CD4-positive, alpha-beta memory T cell (primary cell): ENCODE measurements at regions of chr10 and their contacts with region 1.

Region 1: GRCh38 chr10:97731346-97732051 is 5.4 kb upstream of the ZFYVE27 start:
- DNase-seq: peak; percentile 48 to 58 (median 55)
- H3K4me3 ChIP-seq: no peak overlapping the region
- H3K4me3 Mint-ChIP-seq: peak overlapping the region in 1 of 8 donors; percentile 40
- H3K27ac ChIP-seq: no peak overlapping the region
- H3K27ac Mint-ChIP-seq: no peak overlapping the region
- H3K4me1 ChIP-seq: peaks cover 2% of the 10 kb centered on the region
- H3K4me1 Mint-ChIP-seq: peaks cover 7 to 12% (median 11%) of the 10 kb centered on the region in 4 donors
- H3K27me3 ChIP-seq: no peaks in the 10 kb centered on the region
- H3K27me3 Mint-ChIP-seq: peaks cover 4 to 7% of the 10 kb centered on the region in 2 donors

Region 2: GRCh38 chr10:97532935-97533671 is 198.4 kb before region 1 on chr10:
- CTCF ChIA-PET with region 1: no interaction called
- POLR2A ChIA-PET with region 1: no interaction called
- intact Hi-C with region 1: no loop called
- DNase-seq: no peak
- H3K4me3 ChIP-seq: no peak overlapping the region
- H3K4me3 Mint-ChIP-seq: no peak overlapping the region
- H3K27ac ChIP-seq: no peak overlapping the region
- H3K27ac Mint-ChIP-seq: no peak overlapping the region
- H3K4me1 ChIP-seq: no peaks in the 10 kb centered on the region
- H3K4me1 Mint-ChIP-seq: peaks cover 0 to 2% (median 1%) of the 10 kb centered on the region in 4 donors
- H3K27me3 ChIP-seq: no peaks in the 10 kb centered on the region
- H3K27me3 Mint-ChIP-seq: no peaks in the 10 kb centered on the region

Region 3: DNA sequence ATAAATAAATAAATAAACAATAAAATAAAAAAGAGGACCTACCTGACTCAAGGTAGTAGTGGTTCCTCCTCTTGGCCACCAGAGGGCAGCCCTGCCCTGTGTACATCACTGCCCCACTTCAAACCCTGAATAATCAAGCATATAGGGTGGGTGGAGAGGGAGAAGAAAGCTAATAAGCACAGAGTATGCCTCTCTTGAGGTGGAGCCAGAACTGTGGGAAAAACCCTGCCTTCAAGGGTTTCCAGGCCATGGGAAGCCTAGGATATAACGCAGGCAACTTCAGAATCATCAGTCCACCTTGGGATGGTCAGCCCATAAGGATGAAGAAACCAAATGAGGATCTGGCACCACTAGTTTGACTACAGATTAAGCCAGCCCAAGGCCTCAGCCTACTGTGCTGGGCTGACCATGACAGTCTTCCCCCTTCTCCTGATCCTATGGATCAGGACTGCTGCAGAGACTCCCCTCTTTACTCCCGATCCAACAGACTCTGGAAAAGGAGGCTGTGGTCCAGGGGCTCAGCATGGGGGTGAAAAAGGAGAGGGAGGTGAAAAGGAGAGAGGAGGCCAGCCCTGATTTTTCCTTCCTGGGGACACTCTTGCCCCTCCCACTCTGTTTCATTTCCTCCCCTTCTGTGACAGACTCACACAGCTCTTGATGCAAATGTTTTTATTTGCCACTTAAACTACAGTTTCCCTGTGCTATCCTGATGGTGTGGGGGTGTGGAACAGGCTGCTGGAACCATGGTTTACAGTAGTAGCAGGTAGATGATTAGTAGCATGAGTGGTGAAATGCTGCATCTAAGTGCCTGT is 54.5 kb before region 1 on chr10:
- CTCF ChIA-PET with region 1: interaction called, 159 read pairs
- POLR2A ChIA-PET with region 1: interaction called, 4 read pairs
- intact Hi-C with region 1: loop called (anchors 1 kb)
- DNase-seq: peak; percentile 48 to 56 (median 53)
- H3K4me3 ChIP-seq: no peak overlapping the region
- H3K4me3 Mint-ChIP-seq: no peak overlapping the region
- H3K27ac ChIP-seq: no peak overlapping the region
- H3K27ac Mint-ChIP-seq: peak overlapping the region in 4 of 7 donors; percentile 7 to 73 (median 38)
- H3K4me1 ChIP-seq: no peaks in the 10 kb centered on the region
- H3K4me1 Mint-ChIP-seq: peaks cover 0 to 1% (median 0%) of the 10 kb centered on the region in 4 donors
- H3K27me3 ChIP-seq: no peaks in the 10 kb centered on the region
- H3K27me3 Mint-ChIP-seq: no peaks in the 10 kb centered on the region

Region 4: GRCh38 chr10:97714048-97714371 is 17.5 kb before region 1 on chr10:
- CTCF ChIA-PET with region 1: interaction called, 436 read pairs
- POLR2A ChIA-PET with region 1: interaction called, 16 read pairs
- intact Hi-C with region 1: loop called (anchors 1 kb)
- DNase-seq: peak; percentile 50 to 69 (median 54)
- H3K4me3 ChIP-seq: peak overlapping the region; percentile 30 to 55
- H3K4me3 Mint-ChIP-seq: peak overlapping the region; percentile 98 to 100 (median 99)
- H3K27ac ChIP-seq: no peak overlapping the region
- H3K27ac Mint-ChIP-seq: peak overlapping the region; percentile 37 to 96 (median 92)
- H3K4me1 ChIP-seq: peaks cover 6% of the 10 kb centered on the region
- H3K4me1 Mint-ChIP-seq: peaks cover 7 to 22% (median 14%) of the 10 kb centered on the region in 4 donors
- H3K27me3 ChIP-seq: no peaks in the 10 kb centered on the region
- H3K27me3 Mint-ChIP-seq: peaks cover 7 to 9% of the 10 kb centered on the region in 2 donors

Region 5: DNA sequence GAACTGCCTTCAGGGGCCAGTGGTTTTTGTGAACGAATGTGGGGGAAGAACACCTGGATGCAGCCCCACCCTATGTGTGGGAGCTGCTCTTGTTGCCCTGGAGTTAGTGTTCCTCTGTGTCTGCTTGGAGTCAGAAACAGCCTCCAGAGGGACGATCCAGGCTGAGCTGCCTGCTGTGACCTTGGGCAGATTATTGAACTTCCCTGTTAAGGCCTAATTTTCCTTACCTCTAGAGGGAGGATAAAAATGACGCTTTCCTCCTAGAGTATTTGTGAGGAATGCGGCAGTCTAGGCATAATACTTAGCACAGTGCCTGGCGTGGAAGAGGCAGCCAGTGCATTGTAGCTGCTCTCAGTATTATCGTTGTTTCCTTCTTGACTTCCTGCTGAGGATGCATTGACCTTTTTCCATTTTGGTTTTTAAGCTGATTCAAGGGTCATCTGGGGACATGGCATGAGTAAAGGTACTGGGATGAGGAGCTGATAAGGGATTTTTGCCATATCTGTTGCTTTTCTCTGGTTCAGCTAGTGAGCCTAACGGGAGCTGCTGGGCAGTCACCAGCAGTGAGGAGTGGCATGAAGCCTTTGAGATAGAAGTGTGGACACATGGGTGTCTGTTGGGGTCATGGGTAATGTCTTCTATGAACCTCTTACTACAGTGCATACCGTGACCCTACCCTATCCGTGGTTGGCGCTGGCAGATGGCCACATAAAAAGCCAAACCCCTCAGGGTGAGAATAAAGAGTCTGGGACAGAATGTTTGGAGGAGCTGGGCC is 11.9 kb after region 1 on chr10:
- CTCF ChIA-PET with region 1: interaction called, 19 read pairs
- POLR2A ChIA-PET with region 1: interaction called, 5 read pairs
- intact Hi-C with region 1: no loop called
- DNase-seq: no peak
- H3K4me3 ChIP-seq: no peak overlapping the region
- H3K4me3 Mint-ChIP-seq: peak overlapping the region in 1 of 8 donors; percentile 24
- H3K27ac ChIP-seq: no peak overlapping the region
- H3K27ac Mint-ChIP-seq: peak overlapping the region in 1 of 7 donors; percentile 14
- H3K4me1 ChIP-seq: peaks cover 29% of the 10 kb centered on the region
- H3K4me1 Mint-ChIP-seq: peaks cover 28 to 61% (median 45%) of the 10 kb centered on the region in 4 donors
- H3K27me3 ChIP-seq: no peaks in the 10 kb centered on the region
- H3K27me3 Mint-ChIP-seq: no peaks in the 10 kb centered on the region

Region 6: DNA sequence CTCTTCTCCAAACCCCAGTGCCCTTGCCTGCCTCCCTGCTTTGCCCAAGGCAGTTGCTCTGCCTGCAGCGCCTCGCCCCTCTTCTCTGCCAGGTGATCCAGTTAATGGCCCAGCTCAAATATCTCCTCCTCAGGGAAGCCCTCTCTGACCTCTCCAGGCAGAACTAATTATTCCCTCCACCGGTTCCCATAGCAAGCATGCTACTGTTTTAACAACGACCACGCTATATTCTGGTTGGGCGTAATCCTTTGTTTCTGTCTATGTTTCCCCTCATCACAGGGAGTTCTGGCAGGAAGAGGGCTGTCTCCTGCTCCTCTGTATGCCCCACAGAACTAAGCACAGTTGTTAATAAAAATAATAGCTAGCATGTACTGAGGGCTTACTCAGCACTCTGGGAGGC is 366.1 kb after region 1 on chr10:
- CTCF ChIA-PET with region 1: no interaction called
- POLR2A ChIA-PET with region 1: no interaction called
- intact Hi-C with region 1: no loop called
- DNase-seq: no peak
- H3K4me3 ChIP-seq: no peak overlapping the region
- H3K4me3 Mint-ChIP-seq: no peak overlapping the region
- H3K27ac ChIP-seq: no peak overlapping the region
- H3K27ac Mint-ChIP-seq: no peak overlapping the region
- H3K4me1 ChIP-seq: no peaks in the 10 kb centered on the region
- H3K4me1 Mint-ChIP-seq: no peaks in the 10 kb centered on the region
- H3K27me3 ChIP-seq: no peaks in the 10 kb centered on the region
- H3K27me3 Mint-ChIP-seq: peaks cover 12 to 15% of the 10 kb centered on the region in 2 donors

Region 7: DNA sequence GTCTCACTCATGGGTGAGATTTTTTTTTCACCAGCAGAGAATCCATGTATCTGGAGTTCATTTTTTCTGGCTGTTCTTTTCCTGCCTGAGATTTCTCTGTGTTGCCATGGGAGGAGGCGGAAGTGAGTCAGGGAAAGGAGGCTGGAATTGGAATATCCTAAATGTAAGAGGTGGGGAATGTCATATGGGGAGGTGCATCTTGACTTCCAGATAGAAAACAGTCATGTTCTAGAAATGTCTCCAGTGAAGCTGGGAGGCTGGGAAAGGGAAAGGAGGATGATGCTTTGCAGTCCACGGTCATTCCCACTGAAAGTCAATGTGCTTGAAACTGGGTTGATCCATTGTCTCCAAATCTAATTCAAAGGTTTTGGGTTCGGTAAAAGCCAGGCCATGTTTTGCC is 754.9 kb after region 1 on chr10:
- CTCF ChIA-PET with region 1: no interaction called
- POLR2A ChIA-PET with region 1: no interaction called
- intact Hi-C with region 1: no loop called
- DNase-seq: no peak
- H3K4me3 ChIP-seq: no peak overlapping the region
- H3K4me3 Mint-ChIP-seq: no peak overlapping the region
- H3K27ac ChIP-seq: no peak overlapping the region
- H3K27ac Mint-ChIP-seq: no peak overlapping the region
- H3K4me1 ChIP-seq: peaks cover 5% of the 10 kb centered on the region
- H3K4me1 Mint-ChIP-seq: peaks cover 0 to 8% (median 4%) of the 10 kb centered on the region in 4 donors
- H3K27me3 ChIP-seq: no peaks in the 10 kb centered on the region
- H3K27me3 Mint-ChIP-seq: peaks cover 4 to 7% of the 10 kb centered on the region in 2 donors